Posterior vena cava (tissue), 2 donors: ENCODE measurements at regions of chr13 and their contacts with region 1.

Region 1: DNA sequence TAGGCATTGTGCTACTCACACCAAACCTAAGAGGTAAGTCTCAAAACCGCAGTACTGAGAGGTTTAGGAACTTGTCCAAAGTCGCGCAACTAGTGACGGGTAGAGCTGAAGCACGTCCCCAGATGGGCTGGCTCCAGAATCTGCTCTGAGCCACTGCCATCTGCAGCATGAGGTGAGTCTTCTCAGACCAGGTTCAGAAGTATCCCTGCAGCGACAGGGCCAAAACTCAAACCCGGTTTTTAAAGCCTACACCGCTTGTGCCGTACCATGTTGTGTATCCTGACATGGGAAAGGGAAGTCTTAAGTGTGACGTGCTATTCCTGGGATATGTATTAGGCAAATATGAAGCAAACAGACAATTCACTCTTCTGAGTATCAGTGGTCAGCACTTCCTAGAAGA is 45.1 kb downstream of the ATP7B start:
- DNase-seq: no peak

Region 2: GRCh38 chr13:51452361-51453206 is 513.6 kb before region 1 on chr13 and contains the start of gene INTS6:
- intact Hi-C with region 1: no loop called
- DNase-seq: peak; percentile 100
- total RNA-seq, gene INTS6: 27.0 to 29.1 TPM

Region 3: DNA sequence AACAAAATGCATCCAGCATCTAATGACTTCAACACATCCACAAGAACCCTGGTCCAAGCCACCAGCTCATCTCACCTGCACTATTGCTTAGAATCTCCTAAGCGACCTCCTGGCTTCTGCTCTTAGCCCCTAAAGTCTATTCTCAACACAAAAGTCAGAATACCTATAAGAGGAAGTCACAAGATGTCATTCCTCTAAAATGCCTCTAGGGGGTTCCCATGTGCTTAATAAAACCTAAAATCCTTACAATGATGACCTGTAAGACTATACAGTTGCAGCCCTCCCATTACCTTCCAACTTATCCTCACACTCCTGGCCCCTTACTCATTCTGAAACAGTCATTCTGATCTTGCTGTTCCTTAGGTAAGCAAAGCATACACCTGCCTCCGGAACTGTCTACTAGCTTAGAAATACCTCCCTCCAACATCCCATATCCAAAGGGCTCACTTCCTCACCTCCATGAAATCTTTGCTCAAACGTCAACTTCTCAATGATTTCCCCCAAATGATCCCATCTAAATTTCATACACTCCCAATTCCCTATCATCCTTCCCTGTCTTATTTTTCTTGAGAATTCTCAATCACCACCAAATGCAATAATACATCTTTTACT is 35.0 kb after region 1 on chr13:
- intact Hi-C with region 1: loop called in 1 of 2 experiments (anchors 1 kb)
- DNase-seq: no peak